H1 (cell line): ENCODE measurements at regions of chr10 and their contacts with region 1.

Region 1: GRCh38 chr10:101120884-101121653 is 10.0 kb upstream of the TLX1 start:
- DNase-seq: no peak
- H3K4me3 ChIP-seq: peak overlapping the region; percentile 26 to 53 (median 26); a peak in 5 of 8 replicates
- H3K27ac ChIP-seq: no peak overlapping the region
- H3K4me1 ChIP-seq: peaks cover 0 to 9% (median 5%) of the 10 kb centered on the region in 4 experiments; a peak in 5 of 7 replicates
- H3K27me3 ChIP-seq: peaks cover 75 to 84% (median 81%) of the 10 kb centered on the region in 4 experiments
- CTCF ChIP-seq: no peak
- EP300 ChIP-seq: no peak
- POLR2A ChIP-seq: no peak
- RAD21 ChIP-seq: no peak

Region 2: DNA sequence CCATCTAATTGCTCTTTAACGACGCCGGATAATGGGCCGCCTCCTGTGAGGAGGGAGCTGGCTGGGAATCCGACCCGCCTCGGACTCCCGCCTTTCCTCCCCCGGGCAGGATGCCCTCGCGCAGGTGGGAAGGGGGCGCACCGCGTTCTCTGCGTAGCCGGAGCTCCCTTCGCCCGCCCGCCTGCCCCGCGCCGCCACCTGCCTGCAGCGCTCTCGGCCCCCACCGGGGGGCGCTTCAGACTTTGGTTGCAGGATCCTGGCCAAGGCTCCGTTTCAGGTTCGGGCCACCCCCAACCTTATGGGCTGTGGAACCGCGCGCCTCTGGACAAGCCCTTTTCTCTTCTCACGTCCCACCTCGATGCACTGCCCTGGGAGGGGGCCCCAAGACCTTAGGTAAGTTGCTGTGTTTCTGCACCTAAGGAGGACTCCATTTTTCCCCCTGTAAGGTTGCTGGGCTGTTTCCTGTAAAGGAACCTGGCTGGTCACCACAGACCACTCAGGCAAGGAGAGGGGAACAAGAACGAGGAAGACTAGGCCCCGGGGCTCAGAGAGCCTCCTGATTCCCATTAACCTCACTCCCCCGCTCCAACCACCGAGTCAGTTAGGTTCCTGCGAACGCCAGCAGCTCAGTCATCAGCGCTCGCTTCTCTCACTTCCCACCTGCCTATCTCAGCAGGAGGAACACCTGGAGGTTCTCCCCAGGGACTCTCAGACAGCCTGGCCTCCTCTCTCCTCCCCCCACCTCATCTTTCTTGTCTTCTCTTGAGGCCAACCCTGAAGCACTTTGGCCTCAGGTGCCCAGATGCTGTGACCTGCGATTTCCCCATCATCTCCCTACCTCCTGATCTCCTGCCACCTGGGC is 70.6 kb before region 1 on chr10:
- CTCF ChIA-PET with region 1: interaction called, 20 read pairs
- POLR2A ChIA-PET with region 1: no interaction called
- DNase-seq: peak in 1 of 2 experiments; percentile 99
- H3K4me3 ChIP-seq: peak overlapping the region in 2 of 4 experiments; percentile 10 to 49; a peak in 3 of 8 replicates
- H3K27ac ChIP-seq: no peak overlapping the region
- H3K4me1 ChIP-seq: peaks cover 9 to 23% (median 17%) of the 10 kb centered on the region in 4 experiments
- H3K27me3 ChIP-seq: peaks cover 38 to 66% (median 60%) of the 10 kb centered on the region in 4 experiments
- CTCF ChIP-seq: peak; percentile 73 to 95 (median 84)
- EP300 ChIP-seq: no peak
- POLR2A ChIP-seq: no peak
- RAD21 ChIP-seq: peak; percentile 64 to 74

Region 3: GRCh38 chr10:101067356-101068083 is 53.5 kb before region 1 on chr10:
- CTCF ChIA-PET with region 1: interaction called, 10 read pairs
- POLR2A ChIA-PET with region 1: interaction called, 3 read pairs
- DNase-seq: peak in 1 of 2 experiments; percentile 94
- H3K4me3 ChIP-seq: peak overlapping the region; percentile 42 to 90 (median 64)
- H3K27ac ChIP-seq: no peak overlapping the region
- H3K4me1 ChIP-seq: peaks cover 4 to 27% (median 15%) of the 10 kb centered on the region in 4 experiments
- H3K27me3 ChIP-seq: peaks cover 43 to 63% (median 56%) of the 10 kb centered on the region in 4 experiments
- CTCF ChIP-seq: peak; percentile 64 to 93 (median 81)
- EP300 ChIP-seq: no peak
- POLR2A ChIP-seq: no peak
- RAD21 ChIP-seq: peak; percentile 76 to 80

Region 4: GRCh38 chr10:101095542-101096213 is 25.4 kb before region 1 on chr10:
- CTCF ChIA-PET with region 1: interaction called, 128 read pairs
- POLR2A ChIA-PET with region 1: interaction called, 3 read pairs
- DNase-seq: peak; percentile 96
- H3K4me3 ChIP-seq: peak overlapping the region in 1 of 4 experiments; percentile 19; a peak in 1 of 8 replicates
- H3K27ac ChIP-seq: no peak overlapping the region
- H3K4me1 ChIP-seq: peaks cover 3 to 15% (median 8%) of the 10 kb centered on the region in 4 experiments; a peak in 5 of 7 replicates
- H3K27me3 ChIP-seq: peaks cover 0 to 25% (median 10%) of the 10 kb centered on the region in 4 experiments; a peak in 4 of 7 replicates
- CTCF ChIP-seq: peak; percentile 89 to 99 (median 92)
- EP300 ChIP-seq: no peak
- POLR2A ChIP-seq: no peak
- RAD21 ChIP-seq: peak; percentile 68 to 83

Region 5: GRCh38 chr10:101130984-101131961 is 10.2 kb after region 1 on chr10 and contains the start of gene TLX1:
- CTCF ChIA-PET with region 1: interaction called, 20 read pairs
- POLR2A ChIA-PET with region 1: interaction called, 3 read pairs
- DNase-seq: no peak
- H3K4me3 ChIP-seq: peak within 1 kb of the TSS in 3 of 4 experiments; percentile 18 to 51 (median 26); a peak in 3 of 8 replicates
- H3K27ac ChIP-seq: no peak within 1 kb of the TSS
- H3K4me1 ChIP-seq: peaks cover 0 to 22% (median 4%) of the 10 kb centered on the region in 4 experiments; a peak in 5 of 7 replicates
- H3K27me3 ChIP-seq: peaks cover 95 to 100% (median 100%) of the 10 kb centered on the region in 4 experiments
- CTCF ChIP-seq: no peak
- EP300 ChIP-seq: no peak
- POLR2A ChIP-seq: no peak
- RAD21 ChIP-seq: no peak
- total RNA-seq, gene TLX1: not detected in 2 replicates

Region 6: GRCh38 chr10:101282947-101283346 is 161.9 kb after region 1 on chr10:
- CTCF ChIA-PET with region 1: no interaction called
- POLR2A ChIA-PET with region 1: no interaction called
- DNase-seq: no peak
- H3K4me3 ChIP-seq: no peak overlapping the region
- H3K27ac ChIP-seq: no peak overlapping the region
- H3K4me1 ChIP-seq: peaks cover 26 to 38% (median 29%) of the 10 kb centered on the region in 4 experiments
- H3K27me3 ChIP-seq: peaks cover 26 to 60% (median 52%) of the 10 kb centered on the region in 4 experiments
- CTCF ChIP-seq: no peak
- EP300 ChIP-seq: no peak
- POLR2A ChIP-seq: no peak
- RAD21 ChIP-seq: no peak